ENCODE measurements at regions of chr14 and their contacts with region 1.

Region 1: DNA sequence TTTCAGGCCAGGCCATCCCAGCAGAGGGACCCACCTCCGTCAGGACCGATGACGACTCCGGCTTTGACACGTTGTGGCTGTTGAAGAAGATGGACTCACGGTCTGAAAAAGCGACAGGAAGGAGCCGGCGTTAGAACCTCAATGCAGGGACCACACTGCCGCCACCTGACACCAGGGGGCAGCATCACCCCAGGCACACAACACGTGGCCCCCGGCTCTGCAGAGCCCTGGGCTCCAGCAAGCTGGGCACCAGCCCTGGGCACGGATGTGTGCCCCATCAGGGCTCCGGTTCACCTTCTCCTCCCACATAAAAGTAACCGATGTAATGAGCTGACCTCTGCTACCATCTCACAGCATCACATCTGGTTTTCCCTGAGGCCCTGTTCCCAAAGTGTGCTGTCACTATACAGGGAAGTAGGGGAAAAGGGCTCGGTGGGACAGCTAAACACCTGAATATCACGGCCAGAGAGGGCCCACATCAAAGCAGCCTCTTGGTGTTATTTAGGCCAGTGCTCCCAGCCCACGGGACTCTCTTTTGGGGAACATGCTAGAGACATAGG is 29.0 kb downstream of the CHGA start:
- DNase-seq: peak; percentile 49 to 94 (median 74)
- ATAC-seq: peak; percentile 96
- H3K4me3 ChIP-seq: no peak overlapping the region
- H3K27ac ChIP-seq: no peak overlapping the region
- H3K4me1 ChIP-seq: no peaks in the 10 kb centered on the region
- H3K27me3 ChIP-seq: no peaks in the 10 kb centered on the region
- CTCF ChIP-seq: peak; percentile 95

Region 2: DNA sequence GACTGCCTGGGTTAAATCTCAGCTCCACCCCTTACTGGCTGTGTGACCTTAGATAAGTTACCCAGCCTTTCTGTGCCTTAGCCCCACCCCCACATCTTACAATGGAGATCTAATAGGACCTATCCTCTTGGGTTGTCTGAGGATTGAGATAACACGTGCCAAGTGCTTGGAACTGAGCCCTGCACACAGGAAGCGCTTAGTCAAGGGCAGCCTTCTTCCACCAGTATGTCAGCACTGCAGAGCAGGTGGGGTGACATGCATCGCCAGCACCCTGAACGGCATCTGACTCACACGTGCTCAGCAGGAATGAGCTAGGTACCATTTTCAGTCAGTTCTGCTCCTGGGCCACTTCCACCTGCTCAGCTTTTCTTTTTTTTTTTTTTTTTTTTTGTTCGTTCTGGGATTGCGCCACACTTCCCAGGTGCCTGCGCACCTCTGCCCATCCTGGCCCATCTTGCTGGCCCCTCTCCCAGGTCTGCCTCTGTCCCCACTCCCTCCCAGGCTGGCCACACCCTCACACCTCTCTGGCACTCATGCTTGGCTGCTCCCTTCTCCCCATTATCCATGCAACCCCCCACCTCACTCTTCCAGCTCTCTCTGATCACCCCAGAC is 223.1 kb before region 1 on chr14:
- intact Hi-C with region 1: no loop called
- DNase-seq: peak in 1 of 4 donors; percentile 65
- ATAC-seq: peak; percentile 16
- H3K4me3 ChIP-seq: no peak overlapping the region
- H3K27ac ChIP-seq: no peak overlapping the region
- H3K4me1 ChIP-seq: peaks cover 19 to 61% of the 10 kb centered on the region in 2 donors
- H3K27me3 ChIP-seq: no peaks in the 10 kb centered on the region
- CTCF ChIP-seq: no peak

Region 3: GRCh38 chr14:93137864-93138263 is 185.9 kb after region 1 on chr14:
- intact Hi-C with region 1: loop called in 1 of 2 experiments (anchors 5 kb)
- DNase-seq: peak in 3 of 4 donors; percentile 55 to 88 (median 56)
- ATAC-seq: peak; percentile 81
- H3K4me3 ChIP-seq: no peak overlapping the region
- H3K27ac ChIP-seq: no peak overlapping the region
- H3K4me1 ChIP-seq: peaks cover 0 to 12% of the 10 kb centered on the region in 2 donors
- H3K27me3 ChIP-seq: no peaks in the 10 kb centered on the region
- CTCF ChIP-seq: no peak